ENCODE measurements at regions of chr6 and their contacts with region 1.

Region 1: GRCh38 chr6:2791124-2791974 is 26.2 kb downstream of the WRNIP1 start:
- DNase-seq: peak; percentile 61
- H3K4me3 ChIP-seq: no peak overlapping the region
- CTCF ChIP-seq: peak; percentile 68

Region 2: GRCh38 chr6:2448820-2449571 is 342.4 kb before region 1 on chr6:
- CTCF ChIA-PET with region 1: no interaction called
- POLR2A ChIA-PET with region 1: no interaction called
- DNase-seq: peak; percentile 40
- H3K4me3 ChIP-seq: peak overlapping the region; percentile 51
- CTCF ChIP-seq: peak; percentile 81

Region 3: DNA sequence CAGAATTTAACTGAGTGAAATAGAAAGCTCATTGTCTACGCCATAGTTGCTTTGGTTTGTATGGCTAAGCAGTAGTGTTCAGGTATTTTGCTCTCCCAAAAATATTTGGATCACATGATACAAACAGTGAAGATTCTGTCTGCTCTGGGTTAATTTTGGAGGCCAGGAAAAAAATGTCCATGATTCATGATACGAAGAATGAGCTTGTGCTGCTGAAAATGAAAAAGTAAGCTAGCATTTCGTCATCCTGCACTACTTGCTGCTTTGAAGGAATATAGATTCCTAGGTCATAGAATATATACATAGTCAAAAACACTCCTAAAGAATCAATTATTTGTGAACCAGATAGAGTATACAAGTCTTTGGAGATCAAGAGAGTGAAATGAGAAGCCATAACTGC is 17.9 kb before region 1 on chr6:
- CTCF ChIA-PET with region 1: interaction called, 43 read pairs
- POLR2A ChIA-PET with region 1: no interaction called
- DNase-seq: no peak
- H3K4me3 ChIP-seq: no peak overlapping the region
- CTCF ChIP-seq: no peak

Region 4: GRCh38 chr6:2818593-2818992 is 27.2 kb after region 1 on chr6:
- CTCF ChIA-PET with region 1: interaction called, 12 read pairs
- POLR2A ChIA-PET with region 1: no interaction called
- DNase-seq: no peak
- H3K4me3 ChIP-seq: no peak overlapping the region
- CTCF ChIP-seq: no peak

Region 5: DNA sequence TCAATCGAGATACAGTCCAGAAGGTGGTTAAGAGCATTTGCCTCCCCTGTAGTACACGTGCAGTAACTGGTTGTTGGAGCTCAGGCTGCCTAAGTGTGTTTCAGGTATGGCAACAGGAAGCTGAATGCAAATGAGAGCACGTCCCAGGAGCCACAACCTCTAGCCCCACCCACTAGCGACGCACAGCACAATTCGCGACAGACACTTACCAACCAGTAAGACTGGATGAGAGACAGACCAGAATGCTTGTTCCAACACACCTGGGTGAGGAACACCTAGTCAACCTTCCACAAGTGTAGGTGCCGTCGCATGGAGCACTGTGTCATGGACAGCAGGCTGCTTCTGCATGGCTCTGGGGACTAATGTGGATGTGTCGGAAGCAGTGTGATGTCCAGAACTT is 57.5 kb after region 1 on chr6:
- CTCF ChIA-PET with region 1: interaction called, 65 read pairs
- POLR2A ChIA-PET with region 1: interaction called, 3 read pairs
- DNase-seq: no peak
- H3K4me3 ChIP-seq: no peak overlapping the region
- CTCF ChIP-seq: no peak

Region 6: DNA sequence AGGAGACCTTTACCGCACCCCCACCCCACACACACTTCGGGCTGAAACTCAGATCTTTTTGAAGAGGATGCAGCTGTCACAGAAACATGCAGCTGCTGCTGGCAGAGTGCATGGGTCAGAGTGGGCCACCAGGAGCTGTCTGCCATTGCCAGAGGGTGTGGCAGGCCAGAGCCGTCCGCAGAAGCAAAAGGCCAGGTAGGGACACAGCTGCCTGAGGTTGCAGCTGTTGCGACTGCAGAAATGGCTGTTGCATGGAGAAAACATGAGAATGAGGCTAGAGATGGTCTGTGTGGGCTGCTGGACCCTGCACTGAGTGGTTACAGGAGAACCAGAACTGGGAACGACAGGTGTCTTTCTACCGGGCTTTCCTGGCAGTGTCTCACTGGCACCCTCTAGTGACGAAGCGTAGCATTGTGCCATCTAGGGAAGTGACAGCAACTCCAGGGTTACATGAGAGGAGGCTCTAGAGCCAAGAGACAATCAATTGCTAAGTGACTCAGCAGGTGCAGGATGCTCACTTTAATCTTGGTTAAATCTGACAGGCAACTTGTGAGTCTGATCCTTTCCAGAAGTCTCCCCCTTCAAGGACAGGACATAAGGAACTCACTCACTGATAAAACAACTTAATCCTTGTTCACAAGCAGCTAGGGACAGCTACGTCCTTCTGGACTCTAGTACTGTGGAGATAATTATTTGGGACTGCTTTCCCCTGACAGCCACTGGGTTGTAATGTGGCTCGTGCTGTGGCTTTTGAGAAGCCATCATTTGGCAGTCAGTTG is 140.8 kb after region 1 on chr6:
- CTCF ChIA-PET with region 1: interaction called, 114 read pairs
- POLR2A ChIA-PET with region 1: interaction called, 3 read pairs
- DNase-seq: peak; percentile 1
- H3K4me3 ChIP-seq: no peak overlapping the region
- CTCF ChIP-seq: peak; percentile 95